ENCODE measurements at regions of chr22 and their contacts with region 1.

Region 1: DNA sequence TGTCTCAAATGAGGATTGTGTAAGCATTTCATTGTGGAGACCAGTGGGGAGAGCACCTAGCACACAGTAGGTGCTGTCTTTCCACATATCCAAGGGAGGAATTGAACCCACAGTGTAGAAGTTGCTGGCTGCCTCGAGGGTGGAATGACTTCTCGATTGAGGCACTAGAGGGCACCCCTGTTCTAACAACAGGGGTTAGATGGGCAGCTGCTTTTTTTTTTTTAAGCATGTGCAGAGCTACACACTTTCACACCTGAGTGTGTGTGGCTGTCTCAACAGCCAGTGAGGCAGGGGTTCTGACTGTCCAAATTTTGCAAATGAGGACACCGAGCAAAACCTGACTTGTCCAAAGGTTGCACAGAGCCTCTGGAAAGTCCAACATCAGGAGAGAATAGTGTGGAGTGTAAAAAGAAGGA is 118.2 kb upstream of the CRYBB3 start:
- DNase-seq: peak; percentile 82
- H3K4me3 Mint-ChIP-seq: no peak overlapping the region
- H3K27ac Mint-ChIP-seq: no peak overlapping the region
- H3K4me1 Mint-ChIP-seq: peaks cover 51% of the 10 kb centered on the region
- H3K27me3 Mint-ChIP-seq: no peaks in the 10 kb centered on the region

Region 2: GRCh38 chr22:25110846-25111578 is 29.6 kb after region 1 on chr22:
- CTCF ChIA-PET with region 1: interaction called, 19 read pairs
- intact Hi-C with region 1: no loop called
- DNase-seq: peak; percentile 62
- H3K4me3 Mint-ChIP-seq: peak overlapping the region; percentile 75
- H3K27ac Mint-ChIP-seq: no peak overlapping the region
- H3K4me1 Mint-ChIP-seq: peaks cover 25% of the 10 kb centered on the region
- H3K27me3 Mint-ChIP-seq: peaks cover 2% of the 10 kb centered on the region

Region 3: GRCh38 chr22:25172153-25172552 is 90.7 kb after region 1 on chr22:
- CTCF ChIA-PET with region 1: interaction called, 37 read pairs
- intact Hi-C with region 1: loop called (anchors 1 kb)
- DNase-seq: peak; percentile 65
- H3K4me3 Mint-ChIP-seq: no peak overlapping the region
- H3K27ac Mint-ChIP-seq: no peak overlapping the region
- H3K4me1 Mint-ChIP-seq: no peaks in the 10 kb centered on the region
- H3K27me3 Mint-ChIP-seq: no peaks in the 10 kb centered on the region

Region 4: GRCh38 chr22:25362215-25362882 is 280.9 kb after region 1 on chr22:
- CTCF ChIA-PET with region 1: no interaction called
- intact Hi-C with region 1: loop called (anchors 1 kb)
- DNase-seq: peak; percentile 83
- H3K4me3 Mint-ChIP-seq: no peak overlapping the region
- H3K27ac Mint-ChIP-seq: no peak overlapping the region
- H3K4me1 Mint-ChIP-seq: no peaks in the 10 kb centered on the region
- H3K27me3 Mint-ChIP-seq: no peaks in the 10 kb centered on the region

Measured in activated naive CD4-positive, alpha-beta T cell treated with anti-CD3 and anti-CD28 coated beads for 36 hours (primary cell).